Heart left ventricle (tissue), 16 donors: ENCODE measurements at regions of chr10 and their contacts with region 1.

Region 1: DNA sequence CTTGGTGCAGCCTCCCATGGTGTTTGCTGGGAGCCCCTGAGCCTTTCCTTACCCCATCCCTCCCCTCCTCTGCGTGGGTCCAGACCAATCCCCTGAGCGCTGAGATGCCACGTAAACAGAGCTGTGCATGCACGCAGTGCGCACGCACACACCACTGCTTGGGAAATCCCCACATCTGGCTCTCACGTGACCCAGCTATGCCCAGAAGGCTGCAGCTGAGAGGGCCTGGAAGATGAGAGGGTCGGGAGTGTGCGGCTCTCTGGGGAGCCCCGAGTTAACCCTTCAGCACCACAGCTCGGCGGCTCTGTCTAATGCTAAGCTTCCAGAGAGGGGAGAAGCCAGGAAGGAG is 177.2 kb downstream of the SH3PXD2A start:
- DNase-seq: peak; percentile 86 to 92 (median 91)
- ATAC-seq: peak; percentile 78 to 92 (median 83)
- H3K4me3 ChIP-seq: peak overlapping the region in 9 of 12 donors; percentile 21 to 49 (median 34)
- H3K27ac ChIP-seq: peak overlapping the region; percentile 11 to 89 (median 78)
- H3K4me1 ChIP-seq: peaks cover 0 to 44% (median 28%) of the 10 kb centered on the region in 12 donors
- H3K27me3 ChIP-seq: no peaks in the 10 kb centered on the region
- CTCF ChIP-seq: no peak
- POLR2A ChIP-seq: no peak

Region 2: GRCh38 chr10:103598654-103599115 is 79.5 kb before region 1 on chr10:
- intact Hi-C with region 1: loop called in 1 of 10 experiments (anchors 2 kb)
- DNase-seq: no peak
- ATAC-seq: peak; percentile 30 to 70 (median 48)
- H3K4me3 ChIP-seq: no peak overlapping the region
- H3K27ac ChIP-seq: no peak overlapping the region
- H3K4me1 ChIP-seq: peaks cover 0 to 28% (median 6%) of the 10 kb centered on the region in 12 donors
- H3K27me3 ChIP-seq: no peaks in the 10 kb centered on the region
- CTCF ChIP-seq: peak; percentile 35 to 73 (median 66)
- POLR2A ChIP-seq: no peak

Region 3: DNA sequence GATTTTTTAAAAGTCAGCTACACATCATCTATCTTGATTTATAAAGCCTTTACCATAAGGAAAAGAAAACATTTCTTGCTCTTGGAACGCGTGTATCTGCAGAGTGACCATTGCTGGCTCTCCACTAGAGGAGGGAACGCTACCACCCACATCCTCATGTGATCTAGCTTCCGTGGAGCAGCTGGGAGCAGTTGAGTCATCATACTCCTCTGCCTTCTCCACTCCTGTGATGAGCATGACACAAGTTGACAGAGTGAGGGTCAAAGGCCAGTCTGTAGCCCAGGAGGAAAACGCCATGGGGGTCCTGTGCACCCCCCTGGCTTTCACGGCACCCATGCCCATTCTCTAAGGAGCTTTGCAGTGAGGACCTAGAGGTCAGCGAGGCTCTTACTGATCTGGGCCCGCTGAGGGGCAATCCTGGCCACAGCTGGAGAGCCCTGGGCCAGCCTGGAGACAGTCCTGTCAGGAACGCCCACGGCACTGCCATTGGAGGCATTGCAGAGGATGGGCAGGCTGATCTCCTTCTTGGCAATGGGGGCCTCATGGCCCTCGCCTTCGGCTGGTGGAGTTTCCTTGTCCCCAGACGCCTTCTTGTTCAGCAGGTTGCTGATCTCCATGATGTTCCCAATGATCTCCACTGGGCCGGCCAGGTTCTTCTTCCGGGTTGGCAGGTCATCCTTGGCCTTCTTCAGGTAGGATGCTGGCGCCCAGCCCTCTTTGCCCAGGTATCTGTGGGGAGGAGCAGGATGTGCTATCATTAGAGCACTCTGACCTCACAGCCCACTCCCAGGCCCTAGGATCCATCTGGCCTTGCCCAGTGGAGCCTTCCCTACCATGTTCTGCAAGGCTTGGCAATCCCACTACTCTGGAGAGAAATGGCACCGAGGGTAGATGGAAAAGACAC is 65.4 kb before region 1 on chr10:
- intact Hi-C with region 1: loop called in 3 of 10 experiments (anchors 5 kb)
- DNase-seq: peak in 1 of 5 donors; percentile 40
- ATAC-seq: peak in 3 of 4 donors; percentile 46 to 56 (median 49)
- H3K4me3 ChIP-seq: no peak overlapping the region
- H3K27ac ChIP-seq: no peak overlapping the region
- H3K4me1 ChIP-seq: peaks cover 8 to 70% (median 36%) of the 10 kb centered on the region in 12 donors
- H3K27me3 ChIP-seq: no peaks in the 10 kb centered on the region
- CTCF ChIP-seq: no peak
- POLR2A ChIP-seq: no peak